ENCODE measurements at regions of chrX and their contacts with region 1.

Region 1: GRCh38 chrX:53683556-53684414 is 2.7 kb downstream of the HUWE1 start:
- DNase-seq: peak; percentile 98
- H3K4me3 ChIP-seq: peak overlapping the region; percentile 99
- H3K27ac ChIP-seq: peak overlapping the region; percentile 85
- H3K4me1 ChIP-seq: peaks cover 11% of the 10 kb centered on the region
- CTCF ChIP-seq: no peak

Region 2: DNA sequence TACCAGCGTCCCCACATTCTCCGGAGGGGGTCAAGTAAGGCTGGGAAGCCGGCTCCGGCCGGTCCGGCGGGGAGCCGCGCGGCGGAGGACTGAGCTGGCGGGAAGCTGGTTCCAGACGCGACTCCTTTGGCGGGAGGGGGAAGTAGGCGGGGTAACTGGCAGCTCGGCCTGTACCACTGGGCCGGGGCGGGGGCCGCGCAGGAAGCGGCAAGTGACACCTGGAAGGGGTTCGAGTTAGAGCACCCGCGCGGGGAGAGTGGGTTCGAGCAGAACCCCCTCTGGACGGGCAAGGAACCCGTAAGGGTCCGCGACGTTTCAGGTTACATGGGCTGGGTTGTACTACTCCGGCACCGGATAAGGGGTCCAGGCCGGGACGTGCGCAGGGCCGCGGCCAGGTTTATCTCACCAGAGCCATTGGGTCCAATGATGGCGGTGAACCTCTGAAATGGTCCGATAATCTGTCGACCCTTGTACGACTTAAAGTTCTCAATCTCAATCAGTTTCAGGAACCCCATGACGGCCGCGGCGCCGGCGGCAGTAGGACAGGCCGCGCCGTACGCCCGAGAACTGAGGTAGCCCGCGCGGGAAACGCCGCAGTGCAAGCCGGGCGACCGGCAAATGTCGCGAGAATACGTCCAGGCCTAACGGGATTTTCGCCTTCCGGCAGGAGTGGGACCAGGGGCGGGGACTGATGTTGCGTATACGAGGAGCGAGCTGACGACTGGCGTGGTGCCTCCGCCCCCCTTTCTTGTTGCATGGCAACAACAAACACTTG is 261.5 kb before region 1 on chrX and contains the start of gene SMC1A:
- CTCF ChIA-PET with region 1: no interaction called
- POLR2A ChIA-PET with region 1: no interaction called
- intact Hi-C with region 1: loop called (anchors 2 kb)
- DNase-seq: peak; percentile 95
- H3K4me3 ChIP-seq: peak within 1 kb of the TSS; percentile 83
- H3K27ac ChIP-seq: peak within 1 kb of the TSS; percentile 98
- H3K4me1 ChIP-seq: peaks cover 9% of the 10 kb centered on the region
- CTCF ChIP-seq: no peak
- total RNA-seq, gene SMC1A: 41.6 and 65.0 TPM in 2 replicates

Region 3: DNA sequence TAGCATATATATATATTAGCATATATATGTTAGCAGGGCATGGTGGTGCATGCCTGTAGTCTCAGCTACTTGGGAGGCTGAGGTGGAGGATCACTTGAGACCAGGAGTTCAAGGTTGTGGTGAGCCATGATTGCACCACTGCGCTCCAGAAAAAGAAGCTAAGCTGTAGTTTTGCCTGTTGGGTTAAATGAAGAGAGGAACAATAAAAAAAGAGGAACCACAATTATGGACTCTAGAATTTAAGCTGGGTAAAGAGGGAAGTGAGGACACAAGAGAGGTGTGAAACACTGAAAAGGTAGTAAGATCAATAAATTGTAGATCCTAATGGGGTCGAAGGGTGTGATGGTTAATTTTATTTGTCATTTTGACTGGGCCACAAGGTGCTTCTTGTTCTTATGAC is 209.1 kb before region 1 on chrX:
- CTCF ChIA-PET with region 1: no interaction called
- POLR2A ChIA-PET with region 1: no interaction called
- intact Hi-C with region 1: no loop called
- DNase-seq: no peak
- H3K4me3 ChIP-seq: no peak overlapping the region
- H3K27ac ChIP-seq: no peak overlapping the region
- H3K4me1 ChIP-seq: no peaks in the 10 kb centered on the region
- CTCF ChIP-seq: no peak

Region 4: DNA sequence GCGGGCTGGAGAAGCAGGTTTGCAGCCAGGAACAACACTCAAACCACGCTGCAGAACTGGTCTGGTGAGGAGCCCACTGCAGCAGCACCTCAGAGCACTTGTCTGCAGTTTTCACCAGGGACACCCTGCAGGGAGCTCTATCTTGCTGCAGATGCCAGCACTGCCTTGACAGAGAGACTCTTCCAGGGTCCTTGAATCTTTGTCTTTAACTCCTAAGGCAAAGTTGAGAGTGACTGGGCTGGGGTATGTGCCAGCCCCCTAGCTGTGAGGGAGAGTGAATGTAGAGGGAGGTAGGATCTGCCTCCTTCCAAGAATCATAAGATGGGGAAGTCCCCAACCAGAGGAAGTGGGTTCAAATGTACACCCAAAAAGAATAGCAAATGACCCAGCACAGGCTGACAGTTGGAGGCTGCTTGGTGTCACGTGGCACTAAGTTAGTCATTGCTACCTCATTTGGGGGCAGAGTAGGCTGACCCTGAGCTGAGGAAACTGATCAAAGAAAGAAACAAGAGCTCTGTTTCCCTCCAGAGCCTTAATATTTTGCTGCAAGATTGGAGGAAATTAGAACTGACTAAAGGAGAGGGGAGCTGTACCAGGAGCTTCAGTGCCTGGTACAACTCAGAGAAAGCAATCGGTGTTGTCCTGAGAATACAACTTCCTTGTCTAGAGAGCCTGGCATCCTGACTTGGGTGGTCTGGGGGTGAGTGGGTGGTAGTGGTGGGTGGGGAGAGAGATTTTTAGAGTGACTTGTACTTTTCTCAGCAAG is 31.0 kb after region 1 on chrX:
- CTCF ChIA-PET with region 1: interaction called, 5 read pairs
- POLR2A ChIA-PET with region 1: interaction called, 30 read pairs
- intact Hi-C with region 1: loop called (anchors 1 kb)
- DNase-seq: peak; percentile 72
- H3K4me3 ChIP-seq: peak overlapping the region; percentile 49
- H3K27ac ChIP-seq: peak overlapping the region; percentile 78
- H3K4me1 ChIP-seq: peaks cover 46% of the 10 kb centered on the region
- CTCF ChIP-seq: peak; percentile 34; the same call in 1 of the 2 replicates

Region 5: DNA sequence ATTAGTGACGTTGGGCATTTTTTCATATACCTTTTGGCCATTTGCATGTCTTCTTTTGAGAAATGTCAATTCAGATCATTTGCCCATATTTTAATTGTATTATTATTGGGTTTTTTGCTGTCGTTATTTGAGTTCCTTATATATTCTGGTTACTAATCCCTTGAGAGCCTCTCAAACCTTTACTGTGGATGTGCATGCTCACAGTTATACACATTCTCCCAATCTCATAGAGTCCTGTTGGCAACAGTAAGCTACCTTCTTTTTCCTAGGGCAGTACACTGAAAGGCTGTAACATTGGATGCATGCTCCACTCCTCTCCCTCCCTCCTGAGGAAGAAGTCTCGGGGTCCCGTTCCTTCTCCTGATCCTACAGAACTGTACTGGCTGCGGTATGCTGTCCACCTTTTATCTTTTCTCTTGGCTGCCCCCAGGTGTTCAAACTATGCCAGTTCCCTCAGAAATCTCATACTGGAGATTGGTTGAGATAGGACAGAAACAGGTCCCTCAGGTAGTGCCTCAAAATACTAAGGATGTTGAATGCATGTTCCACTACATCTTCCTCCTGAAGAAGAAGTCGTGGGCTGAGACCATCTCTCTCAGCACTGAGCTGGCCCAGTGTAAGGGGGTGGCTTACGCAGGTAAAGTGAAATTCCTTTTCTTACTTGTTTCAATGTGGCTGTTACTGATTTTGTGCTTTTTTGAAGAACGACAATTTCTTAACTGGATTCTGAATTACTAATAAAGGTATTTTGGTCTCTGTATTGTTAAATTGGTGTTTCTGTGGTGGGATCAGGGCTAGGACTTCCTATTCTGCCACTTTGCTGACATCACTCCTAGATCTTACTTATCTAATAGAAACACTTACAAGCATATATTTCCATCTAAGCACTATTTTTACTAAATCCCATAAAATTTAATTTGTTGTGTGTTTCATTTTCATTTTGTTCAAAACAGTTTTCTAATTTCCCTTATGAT is 148.2 kb after region 1 on chrX:
- CTCF ChIA-PET with region 1: no interaction called
- POLR2A ChIA-PET with region 1: no interaction called
- intact Hi-C with region 1: loop called (anchors 5 kb)
- DNase-seq: peak; percentile 50
- H3K4me3 ChIP-seq: no peak overlapping the region
- H3K27ac ChIP-seq: no peak overlapping the region
- H3K4me1 ChIP-seq: no peaks in the 10 kb centered on the region
- CTCF ChIP-seq: peak; percentile 76

Region 6: DNA sequence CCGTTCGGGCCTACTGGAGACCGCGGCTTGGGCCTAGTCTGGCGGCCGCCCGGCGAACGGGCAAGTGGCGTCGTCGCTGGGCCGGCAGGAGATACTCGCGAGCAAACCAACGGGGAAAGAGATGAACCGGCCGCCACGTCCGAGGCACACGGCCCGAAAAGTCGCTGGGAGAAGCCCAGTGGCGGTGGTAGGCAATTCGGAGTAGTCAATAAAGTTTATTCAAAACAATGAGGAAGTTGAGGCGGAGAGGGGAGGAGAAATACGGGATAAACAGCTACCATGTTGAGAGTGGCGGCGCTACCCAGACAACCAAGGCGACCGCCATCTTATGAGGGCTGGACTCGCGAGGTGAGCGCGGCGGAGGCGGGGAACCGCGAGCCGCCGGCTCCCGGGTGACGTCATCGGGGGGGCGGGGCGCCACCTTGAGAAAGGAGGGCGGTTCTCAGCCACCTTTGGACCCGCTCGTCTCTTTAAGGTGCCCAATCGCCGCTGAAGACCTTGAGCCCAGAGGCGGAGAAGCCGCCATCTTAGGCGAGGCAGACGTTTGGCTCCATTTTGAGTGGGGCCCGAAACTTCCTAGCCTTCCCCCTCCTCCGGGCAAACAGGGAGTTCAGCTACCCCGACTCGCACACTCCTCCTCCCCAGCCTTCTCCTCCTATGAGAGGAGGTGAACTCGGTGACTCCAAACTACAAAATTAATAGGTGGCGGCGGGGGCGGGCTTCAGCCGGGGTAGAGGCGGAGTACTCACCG is 360.5 kb after region 1 on chrX and contains the start of gene PHF8:
- CTCF ChIA-PET with region 1: interaction called, 3 read pairs
- POLR2A ChIA-PET with region 1: no interaction called
- intact Hi-C with region 1: loop called (anchors 10 kb)
- DNase-seq: peak; percentile 94
- H3K4me3 ChIP-seq: peak within 1 kb of the TSS; percentile 92
- H3K27ac ChIP-seq: peak within 1 kb of the TSS; percentile 88
- H3K4me1 ChIP-seq: peaks cover 13% of the 10 kb centered on the region
- CTCF ChIP-seq: no peak
- total RNA-seq, gene PHF8: 29.7 and 47.0 TPM in 2 replicates

Region 7: DNA sequence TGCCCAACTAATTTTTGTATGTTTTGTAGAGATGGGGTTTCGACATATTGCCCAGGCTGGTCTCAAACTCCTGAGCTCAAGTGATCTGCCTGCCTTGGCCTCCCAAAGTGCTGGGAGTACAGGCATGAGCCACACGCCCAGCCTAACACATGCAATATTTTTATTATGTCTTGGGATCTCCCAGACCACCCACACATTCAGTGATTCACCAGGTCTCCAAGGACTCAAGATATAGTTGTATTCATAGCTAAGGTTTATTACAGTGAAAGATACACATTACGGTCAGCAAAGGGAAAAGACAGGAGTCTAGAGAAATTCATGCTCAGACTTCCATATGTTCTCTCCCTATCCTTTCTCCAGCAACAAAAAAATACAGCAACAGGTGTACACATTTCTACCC is 524.7 kb after region 1 on chrX:
- CTCF ChIA-PET with region 1: no interaction called
- POLR2A ChIA-PET with region 1: no interaction called
- intact Hi-C with region 1: no loop called
- DNase-seq: no peak
- H3K4me3 ChIP-seq: no peak overlapping the region
- H3K27ac ChIP-seq: no peak overlapping the region
- H3K4me1 ChIP-seq: no peaks in the 10 kb centered on the region
- CTCF ChIP-seq: no peak